ENCODE measurements at regions of chr12 and their contacts with region 1.

Region 1: DNA sequence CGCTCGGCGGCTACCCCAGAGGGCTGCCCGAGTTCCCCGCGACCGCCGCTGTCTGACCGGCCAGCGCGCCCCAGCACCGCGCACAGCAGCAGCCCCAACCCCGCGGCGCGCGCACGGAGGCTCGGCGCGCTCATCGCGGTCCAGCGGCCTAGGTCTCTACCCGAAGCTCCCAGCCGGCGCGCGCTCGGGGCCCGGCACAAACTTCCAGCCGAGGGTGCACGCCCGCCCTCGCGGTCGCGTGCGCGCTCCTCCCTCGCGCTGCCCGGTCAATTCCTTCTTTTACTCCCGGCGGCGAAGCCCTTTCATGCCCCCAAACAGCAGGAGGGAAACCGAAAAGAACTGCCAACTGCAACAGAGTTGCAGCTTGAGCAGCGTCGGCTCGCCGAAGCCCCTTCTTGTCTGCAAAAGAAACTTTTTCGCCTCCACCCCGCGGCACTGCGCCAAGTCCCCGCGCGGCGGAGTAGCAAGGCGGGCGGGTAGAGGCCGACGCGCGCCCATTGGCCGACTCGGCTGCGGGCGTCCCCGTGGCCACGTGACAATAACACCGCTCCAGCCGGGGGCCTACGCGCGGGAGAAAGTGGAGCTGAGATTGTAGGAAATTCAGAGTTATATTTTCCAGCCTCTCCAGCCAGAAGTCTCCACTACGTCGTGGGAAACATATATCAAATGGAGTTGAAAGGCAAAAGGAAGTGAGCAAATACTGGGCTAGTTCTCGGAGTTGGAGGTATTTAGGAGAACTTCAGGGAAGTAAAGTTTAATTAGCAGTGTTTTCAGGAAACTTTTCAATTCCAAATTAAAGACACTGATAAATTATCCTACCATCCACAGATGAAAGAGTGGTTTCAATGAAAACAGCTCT is at the start of gene LRIG3:
- DNase-seq: peak; percentile 96
- H3K4me3 Mint-ChIP-seq: peak within 1 kb of the TSS; percentile 93
- H3K27ac Mint-ChIP-seq: peak within 1 kb of the TSS; percentile 99
- H3K4me1 Mint-ChIP-seq: peaks cover 33% of the 10 kb centered on the region
- H3K27me3 Mint-ChIP-seq: no peaks in the 10 kb centered on the region
- CTCF ChIP-seq: no peak
- total RNA-seq, gene LRIG3: 261 and 357 TPM in 2 replicates

Region 2: DNA sequence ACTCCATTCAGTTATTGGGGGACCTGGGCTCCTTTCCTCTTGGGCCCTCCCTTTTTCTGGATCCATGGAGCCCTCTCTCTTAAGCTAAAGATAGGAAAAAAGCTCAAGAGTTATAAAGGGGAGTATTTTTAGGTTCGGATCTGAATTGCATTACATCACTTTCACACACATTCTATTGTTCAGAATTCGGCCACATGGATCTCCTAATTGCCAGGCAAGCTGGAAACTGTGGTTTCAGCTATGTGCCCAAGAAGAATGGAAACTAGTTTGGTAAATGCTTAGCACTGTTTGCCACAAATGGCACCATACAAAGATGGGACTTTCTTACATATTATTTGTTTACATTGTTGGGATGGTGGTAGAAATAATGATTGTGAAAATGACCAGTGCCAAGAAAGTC is 145.6 kb before region 1 on chr12:
- CTCF ChIA-PET with region 1: no interaction called
- intact Hi-C with region 1: no loop called
- DNase-seq: no peak
- H3K4me3 Mint-ChIP-seq: no peak overlapping the region
- H3K27ac Mint-ChIP-seq: no peak overlapping the region
- H3K4me1 Mint-ChIP-seq: no peaks in the 10 kb centered on the region
- H3K27me3 Mint-ChIP-seq: no peaks in the 10 kb centered on the region
- CTCF ChIP-seq: no peak

Region 3: DNA sequence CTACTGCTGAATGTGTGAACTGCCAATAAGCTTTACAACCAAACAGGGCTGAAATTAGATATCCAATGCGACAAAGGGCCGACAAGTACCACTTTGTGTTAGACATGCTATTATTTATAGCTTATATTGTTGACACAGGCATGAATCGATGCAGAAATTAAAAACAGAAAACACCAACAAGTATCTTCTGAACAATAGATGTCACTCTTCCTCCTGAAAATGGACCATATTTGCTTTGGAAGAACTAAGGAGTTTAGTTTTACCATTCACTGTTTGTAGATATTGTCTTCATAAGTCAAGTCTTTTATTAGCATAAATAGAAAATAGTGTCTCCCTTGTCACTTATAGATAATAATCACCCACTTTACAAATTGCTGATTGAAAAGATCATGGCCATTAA is 86.5 kb before region 1 on chr12:
- CTCF ChIA-PET with region 1: no interaction called
- intact Hi-C with region 1: no loop called
- DNase-seq: no peak
- H3K4me3 Mint-ChIP-seq: no peak overlapping the region
- H3K27ac Mint-ChIP-seq: no peak overlapping the region
- H3K4me1 Mint-ChIP-seq: no peaks in the 10 kb centered on the region
- H3K27me3 Mint-ChIP-seq: no peaks in the 10 kb centered on the region
- CTCF ChIP-seq: no peak

Region 4: DNA sequence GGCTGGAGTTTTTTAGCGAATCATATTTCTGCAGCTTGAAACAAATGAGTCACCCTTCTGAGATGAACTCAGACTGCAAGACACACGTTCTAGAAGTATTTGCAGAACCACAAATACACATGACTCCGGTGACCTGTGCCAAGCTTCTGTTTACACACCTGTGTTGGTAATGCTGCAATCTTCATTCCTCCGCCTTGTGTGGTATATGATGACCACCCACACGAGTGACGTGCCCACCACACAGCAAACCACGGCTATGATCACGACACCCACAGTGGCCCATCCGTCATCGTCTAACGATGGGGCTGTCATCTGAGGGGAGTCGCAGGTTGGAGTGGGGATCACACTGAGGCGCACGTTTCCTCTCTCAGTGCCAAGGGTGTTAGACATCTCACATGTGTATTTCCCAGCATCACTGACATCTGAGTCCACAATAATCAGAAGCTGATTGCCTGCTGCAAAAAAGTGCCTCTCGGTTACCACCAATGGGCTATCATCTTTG is 43.0 kb before region 1 on chr12:
- CTCF ChIA-PET with region 1: interaction called, 3 read pairs
- intact Hi-C with region 1: loop called (anchors 1 kb)
- DNase-seq: peak; percentile 86
- H3K4me3 Mint-ChIP-seq: peak overlapping the region; percentile 22
- H3K27ac Mint-ChIP-seq: peak overlapping the region; percentile 86
- H3K4me1 Mint-ChIP-seq: peaks cover 55% of the 10 kb centered on the region
- H3K27me3 Mint-ChIP-seq: no peaks in the 10 kb centered on the region
- CTCF ChIP-seq: no peak

Region 5: GRCh38 chr12:58931526-58931925 is 11.2 kb after region 1 on chr12:
- CTCF ChIA-PET with region 1: interaction called, 6 read pairs
- intact Hi-C with region 1: loop called (anchors 2 kb)
- DNase-seq: peak; percentile 66
- H3K4me3 Mint-ChIP-seq: peak overlapping the region; percentile 26
- H3K27ac Mint-ChIP-seq: peak overlapping the region; percentile 71
- H3K4me1 Mint-ChIP-seq: peaks cover 55% of the 10 kb centered on the region
- H3K27me3 Mint-ChIP-seq: no peaks in the 10 kb centered on the region
- CTCF ChIP-seq: peak; percentile 75

Region 6: DNA sequence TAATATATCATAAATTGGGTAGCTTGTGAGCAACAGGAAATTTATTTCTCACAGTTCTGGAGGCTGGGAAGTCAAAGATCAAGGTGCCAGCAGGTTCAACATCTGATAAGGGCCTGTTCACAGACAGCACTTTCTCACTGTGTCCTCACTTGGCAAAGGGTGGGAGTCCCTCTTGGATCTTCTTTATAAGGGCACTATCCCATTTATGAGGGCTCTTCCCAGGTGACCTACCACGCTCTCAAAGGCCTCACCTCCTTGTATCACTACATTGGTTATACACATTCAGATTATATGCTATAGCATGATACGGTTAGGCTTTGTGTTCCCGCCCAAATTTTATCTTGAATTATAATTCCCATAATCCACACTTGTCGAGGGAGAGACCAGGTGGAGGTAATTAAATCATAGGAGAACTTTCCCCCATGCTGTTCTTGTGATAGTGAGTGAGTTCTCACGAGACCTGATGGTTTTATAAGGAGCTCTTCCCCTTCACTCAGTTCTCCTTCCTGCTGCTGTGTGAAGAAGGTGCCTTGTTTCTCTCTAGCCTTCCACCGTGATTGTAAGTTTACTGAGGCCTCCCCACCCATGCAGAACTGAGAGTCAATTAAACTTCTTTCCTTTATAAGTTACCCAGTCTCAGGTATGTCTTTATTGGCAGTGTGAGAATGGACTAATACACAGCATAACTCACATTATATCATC is 19.2 kb after region 1 on chr12:
- CTCF ChIA-PET with region 1: interaction called, 6 read pairs
- intact Hi-C with region 1: loop called (anchors 1 kb)
- DNase-seq: peak; percentile 53
- H3K4me3 Mint-ChIP-seq: peak overlapping the region; percentile 44
- H3K27ac Mint-ChIP-seq: peak overlapping the region; percentile 93
- H3K4me1 Mint-ChIP-seq: peaks cover 64% of the 10 kb centered on the region
- H3K27me3 Mint-ChIP-seq: no peaks in the 10 kb centered on the region
- CTCF ChIP-seq: no peak

Region 7: DNA sequence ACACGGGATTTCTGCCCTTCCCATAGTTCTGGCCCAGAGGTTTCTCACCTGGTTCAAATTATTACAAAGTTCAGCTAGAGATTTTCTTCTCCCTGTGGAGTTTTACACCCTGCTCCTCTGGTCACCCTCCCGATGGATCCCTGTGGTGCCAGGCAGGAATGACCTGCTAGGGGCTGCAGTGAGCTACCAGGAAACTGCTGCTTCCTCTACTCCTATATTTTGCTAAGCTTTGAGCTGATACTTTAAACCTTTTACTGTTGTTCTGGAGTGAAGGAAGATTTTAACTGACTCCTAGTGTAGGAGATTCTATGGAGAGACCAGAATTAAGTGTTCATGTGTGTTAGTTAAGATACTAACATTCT is 30.4 kb after region 1 on chr12:
- CTCF ChIA-PET with region 1: interaction called, 3 read pairs
- intact Hi-C with region 1: loop called (anchors 5 kb)
- DNase-seq: peak; percentile 59
- H3K4me3 Mint-ChIP-seq: peak overlapping the region; percentile 48
- H3K27ac Mint-ChIP-seq: peak overlapping the region; percentile 84
- H3K4me1 Mint-ChIP-seq: peaks cover 67% of the 10 kb centered on the region
- H3K27me3 Mint-ChIP-seq: no peaks in the 10 kb centered on the region
- CTCF ChIP-seq: no peak

Region 8: GRCh38 chr12:59055204-59055839 is 135.0 kb after region 1 on chr12:
- CTCF ChIA-PET with region 1: interaction called, 4 read pairs
- intact Hi-C with region 1: loop called (anchors 2 kb)
- DNase-seq: no peak
- H3K4me3 Mint-ChIP-seq: peak overlapping the region; percentile 52
- H3K27ac Mint-ChIP-seq: peak overlapping the region; percentile 97
- H3K4me1 Mint-ChIP-seq: peaks cover 69% of the 10 kb centered on the region
- H3K27me3 Mint-ChIP-seq: no peaks in the 10 kb centered on the region
- CTCF ChIP-seq: no peak

Measured in Calu3 (cell line).